ENCODE measurements at regions of chr12 and their contacts with region 1.

Region 1: GRCh38 chr12:110403146-110403975 is at the start of gene ANAPC7:
- DNase-seq: peak; percentile 81 to 87
- H3K4me3 ChIP-seq: peak within 1 kb of the TSS; percentile 91
- H3K27ac ChIP-seq: peak within 1 kb of the TSS; percentile 88
- H3K4me1 ChIP-seq: peaks cover 11% of the 10 kb centered on the region
- H3K27me3 ChIP-seq: no peaks in the 10 kb centered on the region
- CTCF ChIP-seq: 0 out of 2 replicates have a peak, but pooled peaks have one; percentile 4
- total RNA-seq, gene ANAPC7: 48.7 and 52.4 TPM in 2 replicates

Region 2: GRCh38 chr12:110917466-110917865 is 514.1 kb after region 1 on chr12:
- CTCF ChIA-PET with region 1: interaction called, 14 read pairs
- POLR2A ChIA-PET with region 1: no interaction called
- intact Hi-C with region 1: no loop called
- DNase-seq: peak; percentile 57 to 87
- H3K4me3 ChIP-seq: no peak overlapping the region
- H3K27ac ChIP-seq: peak overlapping the region; percentile 85
- H3K4me1 ChIP-seq: peaks cover 29% of the 10 kb centered on the region
- H3K27me3 ChIP-seq: no peaks in the 10 kb centered on the region
- CTCF ChIP-seq: no peak

Measured in PC-9 (cell line).